ENCODE measurements at regions of chr21 and their contacts with region 1.

Region 1: GRCh38 chr21:41425954-41426675 is at the start of gene MX1:
- DNase-seq: peak; percentile 69 to 90 (median 82)
- H3K4me3 ChIP-seq: peak within 1 kb of the TSS; percentile 82
- H3K4me3 Mint-ChIP-seq: peak within 1 kb of the TSS; percentile 93 to 98 (median 97)
- H3K27ac ChIP-seq: peak within 1 kb of the TSS; percentile 70
- H3K27ac Mint-ChIP-seq: peak within 1 kb of the TSS; percentile 92 to 98 (median 96)
- H3K4me1 ChIP-seq: peaks cover 12% of the 10 kb centered on the region
- H3K4me1 Mint-ChIP-seq: peaks cover 33 to 58% (median 44%) of the 10 kb centered on the region in 3 donors
- H3K27me3 ChIP-seq: no peaks in the 10 kb centered on the region
- H3K27me3 Mint-ChIP-seq: no peaks in the 10 kb centered on the region
- total RNA-seq, gene MX1: 10.5 to 10.6 TPM

Region 2: GRCh38 chr21:41258617-41259016 is 167.5 kb before region 1 on chr21:
- CTCF ChIA-PET with region 1: no interaction called
- POLR2A ChIA-PET with region 1: no interaction called
- DNase-seq: no peak
- H3K4me3 ChIP-seq: no peak overlapping the region
- H3K4me3 Mint-ChIP-seq: no peak overlapping the region
- H3K27ac ChIP-seq: no peak overlapping the region
- H3K27ac Mint-ChIP-seq: no peak overlapping the region
- H3K4me1 ChIP-seq: no peaks in the 10 kb centered on the region
- H3K4me1 Mint-ChIP-seq: no peaks in the 10 kb centered on the region
- H3K27me3 ChIP-seq: no peaks in the 10 kb centered on the region
- H3K27me3 Mint-ChIP-seq: peaks cover 9 to 20% of the 10 kb centered on the region in 2 donors

Region 3: GRCh38 chr21:41361786-41362604 is 64.1 kb before region 1 on chr21 and contains the start of gene MX2:
- CTCF ChIA-PET with region 1: no interaction called
- POLR2A ChIA-PET with region 1: interaction called, 19 read pairs
- DNase-seq: peak; percentile 66 to 95 (median 90)
- H3K4me3 ChIP-seq: peak within 1 kb of the TSS; percentile 91
- H3K4me3 Mint-ChIP-seq: peak within 1 kb of the TSS; percentile 84 to 96 (median 94)
- H3K27ac ChIP-seq: peak within 1 kb of the TSS; percentile 98
- H3K27ac Mint-ChIP-seq: peak within 1 kb of the TSS; percentile 98 to 100 (median 99)
- H3K4me1 ChIP-seq: peaks cover 42% of the 10 kb centered on the region
- H3K4me1 Mint-ChIP-seq: peaks cover 37 to 58% (median 53%) of the 10 kb centered on the region in 3 donors
- H3K27me3 ChIP-seq: no peaks in the 10 kb centered on the region
- H3K27me3 Mint-ChIP-seq: peaks cover 0 to 7% of the 10 kb centered on the region in 2 donors
- total RNA-seq, gene MX2: 13.2 to 17.1 TPM

Region 4: GRCh38 chr21:41369105-41369919 is 56.8 kb before region 1 on chr21:
- CTCF ChIA-PET with region 1: interaction called, 4 read pairs
- POLR2A ChIA-PET with region 1: interaction called, 21 read pairs
- DNase-seq: peak; percentile 6 to 65 (median 32)
- H3K4me3 ChIP-seq: peak overlapping the region; percentile 81
- H3K4me3 Mint-ChIP-seq: peak overlapping the region; percentile 86 to 93 (median 88)
- H3K27ac ChIP-seq: peak overlapping the region; percentile 57
- H3K27ac Mint-ChIP-seq: peak overlapping the region; percentile 89 to 98 (median 94)
- H3K4me1 ChIP-seq: peaks cover 56% of the 10 kb centered on the region
- H3K4me1 Mint-ChIP-seq: peaks cover 50 to 84% (median 65%) of the 10 kb centered on the region in 3 donors
- H3K27me3 ChIP-seq: no peaks in the 10 kb centered on the region
- H3K27me3 Mint-ChIP-seq: no peaks in the 10 kb centered on the region

Region 5: GRCh38 chr21:41411449-41412089 is 14.5 kb before region 1 on chr21:
- CTCF ChIA-PET with region 1: no interaction called
- POLR2A ChIA-PET with region 1: no interaction called
- DNase-seq: peak in 1 of 5 donors; percentile 18
- H3K4me3 ChIP-seq: no peak overlapping the region
- H3K4me3 Mint-ChIP-seq: no peak overlapping the region
- H3K27ac ChIP-seq: no peak overlapping the region
- H3K27ac Mint-ChIP-seq: no peak overlapping the region
- H3K4me1 ChIP-seq: no peaks in the 10 kb centered on the region
- H3K4me1 Mint-ChIP-seq: no peaks in the 10 kb centered on the region
- H3K27me3 ChIP-seq: no peaks in the 10 kb centered on the region
- H3K27me3 Mint-ChIP-seq: peaks cover 0 to 2% of the 10 kb centered on the region in 2 donors